WTC11 (cell line): ENCODE measurements at regions of chr15 and their contacts with region 1.

Region 1: GRCh38 chr15:33292717-33293307 is 18.0 kb upstream of the RYR3 start:
- DNase-seq: peak; percentile 74
- ATAC-seq: peak; percentile 88
- H3K4me3 Mint-ChIP-seq: no peak overlapping the region
- H3K27ac Mint-ChIP-seq: no peak overlapping the region
- H3K4me1 Mint-ChIP-seq: 0 out of 2 replicates have a peak, but pooled peaks cover 4% of the 10 kb centered on the region
- H3K27me3 Mint-ChIP-seq: no peaks in the 10 kb centered on the region
- CTCF ChIP-seq: peak; percentile 46; the same call in 1 of the 2 replicates

Region 2: DNA sequence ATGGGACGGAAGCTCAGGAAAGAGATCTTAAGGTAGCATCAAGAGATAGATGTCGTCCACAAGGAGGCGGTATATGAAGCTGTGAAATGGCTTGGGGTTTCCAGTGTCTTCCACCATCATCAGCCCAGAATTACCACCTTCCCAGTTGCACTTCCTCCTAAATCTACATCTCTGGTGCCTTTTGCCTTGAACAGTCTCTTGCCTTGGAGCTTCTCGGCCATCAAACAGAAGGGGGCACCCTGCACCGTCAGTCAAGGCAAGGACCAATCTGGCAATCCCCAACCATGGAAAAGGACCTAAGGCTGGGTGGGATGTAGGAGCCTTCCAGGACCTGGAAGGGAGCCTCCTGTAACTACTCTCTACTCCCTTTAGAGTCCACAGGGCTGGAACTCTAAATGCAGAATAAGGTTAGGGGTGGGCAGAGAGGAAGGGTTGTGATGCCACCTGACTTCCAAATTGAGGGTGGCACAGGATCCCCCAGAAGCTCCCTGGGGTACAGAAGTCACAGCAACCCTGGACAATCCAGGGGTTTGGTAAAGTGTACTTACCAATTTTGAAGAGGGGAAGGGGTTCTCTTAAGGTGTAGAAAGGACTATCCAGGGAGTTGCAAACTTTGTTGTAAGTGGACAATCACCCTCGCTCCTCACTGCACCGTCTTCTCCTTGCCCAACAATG is 16.9 kb after region 1 on chr15:
- CTCF ChIA-PET with region 1: interaction called, 19 read pairs
- POLR2A ChIA-PET with region 1: interaction called, 3 read pairs
- DNase-seq: peak; percentile 51
- ATAC-seq: peak; percentile 53
- H3K4me3 Mint-ChIP-seq: peak overlapping the region; percentile 82
- H3K27ac Mint-ChIP-seq: no peak overlapping the region
- H3K4me1 Mint-ChIP-seq: peaks cover 27% of the 10 kb centered on the region
- H3K27me3 Mint-ChIP-seq: peaks cover 54% of the 10 kb centered on the region
- CTCF ChIP-seq: no peak; the same call in 1 of the 2 replicates

Region 3: GRCh38 chr15:33324609-33325008 is 31.8 kb after region 1 on chr15:
- CTCF ChIA-PET with region 1: no interaction called
- POLR2A ChIA-PET with region 1: no interaction called
- DNase-seq: no peak
- ATAC-seq: no peak
- H3K4me3 Mint-ChIP-seq: no peak overlapping the region
- H3K27ac Mint-ChIP-seq: no peak overlapping the region
- H3K4me1 Mint-ChIP-seq: peaks cover 10% of the 10 kb centered on the region
- H3K27me3 Mint-ChIP-seq: no peaks in the 10 kb centered on the region
- CTCF ChIP-seq: no peak

Region 4: DNA sequence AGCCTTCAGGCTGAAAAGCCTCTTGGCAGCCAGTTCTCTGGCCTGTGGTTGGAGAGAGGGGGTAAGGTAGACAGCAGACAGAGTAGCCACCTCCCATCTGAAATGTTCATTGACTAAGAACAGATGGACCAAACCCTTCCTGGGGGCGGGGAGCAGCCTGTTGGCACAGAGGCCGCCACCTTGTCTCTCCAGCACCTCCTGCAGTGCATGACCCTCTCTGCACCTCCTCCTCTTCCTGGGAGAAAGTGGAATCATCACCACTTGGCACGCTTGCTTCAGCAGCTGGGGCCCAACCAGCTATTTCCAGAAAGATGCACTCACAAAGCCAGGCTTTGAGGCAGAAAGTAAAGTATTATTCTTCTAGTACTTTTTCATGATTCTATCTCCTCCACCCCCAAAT is 362.0 kb after region 1 on chr15:
- CTCF ChIA-PET with region 1: interaction called, 13 read pairs
- POLR2A ChIA-PET with region 1: no interaction called
- DNase-seq: peak; percentile 45
- ATAC-seq: peak; percentile 73
- H3K4me3 Mint-ChIP-seq: no peak overlapping the region
- H3K27ac Mint-ChIP-seq: no peak overlapping the region
- H3K4me1 Mint-ChIP-seq: peaks cover 2% of the 10 kb centered on the region; the same call in 1 of the 2 replicates
- H3K27me3 Mint-ChIP-seq: no peaks in the 10 kb centered on the region
- CTCF ChIP-seq: no peak

Region 5: GRCh38 chr15:33729653-33730052 is 436.8 kb after region 1 on chr15:
- CTCF ChIA-PET with region 1: interaction called, 24 read pairs
- POLR2A ChIA-PET with region 1: no interaction called
- DNase-seq: no peak
- ATAC-seq: no peak
- H3K4me3 Mint-ChIP-seq: no peak overlapping the region
- H3K27ac Mint-ChIP-seq: no peak overlapping the region
- H3K4me1 Mint-ChIP-seq: no peaks in the 10 kb centered on the region
- H3K27me3 Mint-ChIP-seq: no peaks in the 10 kb centered on the region
- CTCF ChIP-seq: no peak